ENCODE measurements at regions of chr19 and their contacts with region 1.

Region 1: GRCh38 chr19:41740415-41741243 is 14.7 kb upstream of the CEACAM6 start:
- DNase-seq: no peak
- H3K4me3 Mint-ChIP-seq: peak overlapping the region; percentile 3
- H3K27ac Mint-ChIP-seq: peak overlapping the region; percentile 66
- H3K4me1 Mint-ChIP-seq: peaks cover 20% of the 10 kb centered on the region
- H3K27me3 Mint-ChIP-seq: peaks cover 45% of the 10 kb centered on the region

Region 2: DNA sequence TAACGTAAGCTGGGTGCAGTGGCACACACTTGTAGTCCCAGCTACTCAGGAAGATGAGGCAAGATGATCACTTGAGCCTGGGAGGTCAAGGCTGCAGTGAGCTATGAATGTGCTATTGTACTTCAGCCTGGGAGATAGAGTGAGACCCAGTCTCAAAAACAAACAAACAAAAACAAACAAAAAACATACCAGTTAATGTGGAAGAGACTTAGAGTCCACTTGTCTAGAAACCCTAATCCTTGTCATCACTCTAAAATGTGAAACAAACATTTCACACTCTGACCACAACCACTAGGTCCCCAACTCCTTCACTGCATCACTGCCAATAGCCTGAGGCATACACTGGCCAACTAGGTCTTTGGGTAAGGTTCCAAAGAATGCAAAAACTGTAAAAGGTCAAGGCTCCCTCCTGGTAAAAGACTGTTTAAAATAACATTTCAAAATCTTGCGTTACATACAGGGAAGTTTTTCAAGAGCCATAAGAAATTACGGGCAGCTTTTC is 778.1 kb before region 1 on chr19:
- intact Hi-C with region 1: no loop called
- DNase-seq: no peak
- H3K4me3 Mint-ChIP-seq: no peak overlapping the region
- H3K27ac Mint-ChIP-seq: no peak overlapping the region
- H3K4me1 Mint-ChIP-seq: no peaks in the 10 kb centered on the region
- H3K27me3 Mint-ChIP-seq: peaks cover 16% of the 10 kb centered on the region

Region 3: GRCh38 chr19:41775360-41775695 is 34.7 kb after region 1 on chr19:
- intact Hi-C with region 1: loop called (anchors 1 kb)
- DNase-seq: no peak
- H3K4me3 Mint-ChIP-seq: no peak overlapping the region
- H3K27ac Mint-ChIP-seq: no peak overlapping the region
- H3K4me1 Mint-ChIP-seq: peaks cover 25% of the 10 kb centered on the region
- H3K27me3 Mint-ChIP-seq: peaks cover 84% of the 10 kb centered on the region